Caco-2 (cell line): ENCODE measurements at regions of chr17 and their contacts with region 1.

Region 1: DNA sequence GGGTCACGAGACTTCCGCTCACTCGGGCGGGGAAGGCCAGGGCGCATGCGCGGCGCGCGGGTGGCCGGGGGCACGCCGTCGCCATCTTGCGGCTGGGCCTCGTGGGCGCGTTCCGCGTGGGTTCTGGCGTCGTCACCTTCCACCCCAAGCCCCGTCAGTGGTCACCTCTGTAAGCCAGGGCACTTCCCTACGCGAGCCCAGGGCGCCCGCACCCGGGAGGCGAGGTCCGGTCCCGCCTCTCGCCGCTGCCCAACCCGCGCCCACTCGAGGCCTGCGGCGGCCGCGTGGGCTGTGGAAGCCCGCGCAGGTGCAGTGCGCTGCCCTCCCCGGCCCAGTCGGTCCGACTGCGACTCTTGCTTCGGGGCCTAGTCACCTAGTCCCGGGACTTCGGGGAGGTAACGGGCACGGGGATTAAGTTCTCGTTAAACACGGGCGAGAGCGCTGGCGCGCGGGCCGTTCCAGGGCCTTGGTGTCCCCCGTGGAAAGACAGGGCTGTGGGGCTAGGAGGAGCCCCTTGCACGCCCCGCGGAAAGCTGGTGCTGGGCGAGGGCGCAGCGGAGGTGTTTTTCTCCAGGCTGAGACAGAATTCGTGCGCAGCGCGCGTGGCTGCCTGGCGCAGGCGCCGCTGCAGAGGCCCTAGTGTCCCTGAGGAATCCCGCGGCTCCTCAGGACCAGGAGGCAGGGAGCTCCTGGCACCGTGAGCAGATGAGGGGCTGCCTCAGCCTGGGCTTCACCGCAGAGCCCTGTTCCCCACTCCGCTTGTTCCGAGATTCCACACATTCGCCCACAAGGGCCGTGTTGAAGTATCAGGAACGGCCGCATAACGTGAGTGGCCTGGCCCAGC is 472 bp upstream of the ARHGDIA start:
- DNase-seq: peak; percentile 58 to 97
- H3K4me3 ChIP-seq: peak overlapping the region; percentile 81
- H3K4me3 Mint-ChIP-seq: peak overlapping the region; percentile 78
- H3K27ac Mint-ChIP-seq: peak overlapping the region; percentile 87
- H3K4me1 ChIP-seq: peaks cover 43% of the 10 kb centered on the region
- H3K4me1 Mint-ChIP-seq: peaks cover 16% of the 10 kb centered on the region
- H3K27me3 ChIP-seq: no peaks in the 10 kb centered on the region
- H3K27me3 Mint-ChIP-seq: no peaks in the 10 kb centered on the region
- CTCF ChIP-seq: peak; percentile 26 to 52

Region 2: GRCh38 chr17:81860756-81861518 is 10.7 kb before region 1 on chr17:
- CTCF ChIA-PET with region 1: interaction called, 3 read pairs
- POLR2A ChIA-PET with region 1: interaction called, 4 read pairs
- intact Hi-C with region 1: loop called (anchors 1 kb)
- DNase-seq: peak; percentile 99 to 100
- H3K4me3 ChIP-seq: peak overlapping the region; percentile 61
- H3K4me3 Mint-ChIP-seq: peak overlapping the region; percentile 89
- H3K27ac Mint-ChIP-seq: peak overlapping the region; percentile 94
- H3K4me1 ChIP-seq: peaks cover 17% of the 10 kb centered on the region
- H3K4me1 Mint-ChIP-seq: peaks cover 18% of the 10 kb centered on the region
- H3K27me3 ChIP-seq: no peaks in the 10 kb centered on the region
- H3K27me3 Mint-ChIP-seq: no peaks in the 10 kb centered on the region
- CTCF ChIP-seq: no peak

Region 3: GRCh38 chr17:81902023-81902652 is 30.5 kb after region 1 on chr17 and contains the start of gene NPB:
- CTCF ChIA-PET with region 1: interaction called, 10 read pairs
- POLR2A ChIA-PET with region 1: no interaction called
- intact Hi-C with region 1: no loop called
- DNase-seq: peak in 1 of 2 experiments; percentile 30
- H3K4me3 ChIP-seq: peak within 1 kb of the TSS; percentile 17
- H3K4me3 Mint-ChIP-seq: peak within 1 kb of the TSS; percentile 37
- H3K27ac Mint-ChIP-seq: no peak within 1 kb of the TSS
- H3K4me1 ChIP-seq: peaks cover 5% of the 10 kb centered on the region; the same call in 1 of the 2 replicates
- H3K4me1 Mint-ChIP-seq: peaks cover 7% of the 10 kb centered on the region
- H3K27me3 ChIP-seq: no peaks in the 10 kb centered on the region
- H3K27me3 Mint-ChIP-seq: no peaks in the 10 kb centered on the region
- CTCF ChIP-seq: no peak
- total RNA-seq, gene NPB: 0.37 and 0.68 TPM in 2 replicates

Region 4: GRCh38 chr17:81927653-81928543 is 56.3 kb after region 1 on chr17 and contains the start of gene MAFG:
- CTCF ChIA-PET with region 1: no interaction called
- POLR2A ChIA-PET with region 1: no interaction called
- intact Hi-C with region 1: no loop called
- DNase-seq: peak; percentile 90 to 94
- H3K4me3 ChIP-seq: peak within 1 kb of the TSS; percentile 89
- H3K4me3 Mint-ChIP-seq: peak within 1 kb of the TSS; percentile 77
- H3K27ac Mint-ChIP-seq: peak within 1 kb of the TSS; percentile 85
- H3K4me1 ChIP-seq: peaks cover 14% of the 10 kb centered on the region
- H3K4me1 Mint-ChIP-seq: peaks cover 24% of the 10 kb centered on the region
- H3K27me3 ChIP-seq: no peaks in the 10 kb centered on the region
- H3K27me3 Mint-ChIP-seq: no peaks in the 10 kb centered on the region
- CTCF ChIP-seq: peak; percentile 22 to 26
- total RNA-seq, gene MAFG: 28.9 and 29.1 TPM in 2 replicates

Region 5: DNA sequence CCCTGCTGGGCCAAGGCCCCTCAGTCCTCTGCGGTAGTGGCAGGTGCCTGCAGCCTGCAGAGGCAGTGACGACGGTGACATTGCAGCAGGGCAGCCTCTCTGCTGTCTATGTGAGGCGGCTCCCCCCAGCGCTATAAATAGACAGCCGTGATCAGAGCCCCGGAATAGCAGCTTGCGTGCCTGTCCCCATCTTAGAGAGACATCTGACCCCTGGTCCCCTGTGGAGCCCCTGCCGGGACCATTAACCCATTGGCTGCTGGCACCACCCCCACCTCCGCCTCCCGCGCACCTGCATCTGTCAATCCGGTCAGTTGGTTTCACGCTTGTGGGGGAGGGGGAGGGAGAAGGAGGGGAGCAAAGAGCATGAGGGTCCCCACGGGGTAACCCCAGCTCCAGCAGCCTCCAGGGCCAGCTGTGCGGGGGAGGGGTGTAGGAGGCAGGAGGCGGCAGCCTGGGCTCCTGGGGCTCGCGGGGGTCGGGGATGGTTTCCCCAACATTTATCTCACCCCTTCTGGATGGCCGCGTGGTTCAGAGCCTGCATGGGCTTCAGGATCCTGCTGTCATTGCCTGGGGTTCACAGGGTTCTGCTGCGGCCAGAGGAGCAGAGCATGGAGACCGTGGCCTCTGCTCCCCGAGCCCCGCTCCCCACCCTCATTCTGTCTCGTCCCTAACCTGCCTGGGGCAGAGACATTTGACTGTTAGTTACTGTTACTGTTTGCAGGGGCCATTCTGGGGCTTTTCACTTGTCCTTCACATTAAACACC is 70.4 kb after region 1 on chr17:
- CTCF ChIA-PET with region 1: no interaction called
- POLR2A ChIA-PET with region 1: no interaction called
- intact Hi-C with region 1: no loop called
- DNase-seq: no peak
- H3K4me3 ChIP-seq: no peak overlapping the region
- H3K4me3 Mint-ChIP-seq: no peak overlapping the region
- H3K27ac Mint-ChIP-seq: no peak overlapping the region
- H3K4me1 ChIP-seq: peaks cover 9% of the 10 kb centered on the region
- H3K4me1 Mint-ChIP-seq: peaks cover 5% of the 10 kb centered on the region
- H3K27me3 ChIP-seq: no peaks in the 10 kb centered on the region
- H3K27me3 Mint-ChIP-seq: no peaks in the 10 kb centered on the region
- CTCF ChIP-seq: no peak